CD4-positive, alpha-beta memory T cell (primary cell): ENCODE measurements at regions of chr4 and their contacts with region 1.

Region 1: GRCh38 chr4:184453365-184454160 is 20.8 kb downstream of the IRF2 start:
- DNase-seq: peak; percentile 42 to 82 (median 56)
- H3K4me3 ChIP-seq: no peak overlapping the region
- H3K4me3 Mint-ChIP-seq: peak overlapping the region in 7 of 8 donors; percentile 42 to 84 (median 71)
- H3K27ac ChIP-seq: peak overlapping the region; percentile 44
- H3K27ac Mint-ChIP-seq: peak overlapping the region; percentile 79 to 96 (median 88)
- H3K4me1 ChIP-seq: peaks cover 74% of the 10 kb centered on the region
- H3K4me1 Mint-ChIP-seq: peaks cover 56 to 90% (median 72%) of the 10 kb centered on the region in 4 donors
- H3K27me3 ChIP-seq: no peaks in the 10 kb centered on the region
- H3K27me3 Mint-ChIP-seq: no peaks in the 10 kb centered on the region

Region 2: GRCh38 chr4:184310171-184310567 is 143.4 kb before region 1 on chr4:
- CTCF ChIA-PET with region 1: no interaction called
- POLR2A ChIA-PET with region 1: no interaction called
- intact Hi-C with region 1: loop called (anchors 1 kb)
- DNase-seq: peak; percentile 46 to 61 (median 48)
- H3K4me3 ChIP-seq: no peak overlapping the region
- H3K4me3 Mint-ChIP-seq: peak overlapping the region in 7 of 8 donors; percentile 27 to 63 (median 53)
- H3K27ac ChIP-seq: no peak overlapping the region
- H3K27ac Mint-ChIP-seq: peak overlapping the region; percentile 17 to 94 (median 71)
- H3K4me1 ChIP-seq: peaks cover 15% of the 10 kb centered on the region
- H3K4me1 Mint-ChIP-seq: peaks cover 18 to 29% (median 24%) of the 10 kb centered on the region in 4 donors
- H3K27me3 ChIP-seq: no peaks in the 10 kb centered on the region
- H3K27me3 Mint-ChIP-seq: no peaks in the 10 kb centered on the region

Region 3: GRCh38 chr4:184417802-184418511 is 35.6 kb before region 1 on chr4:
- CTCF ChIA-PET with region 1: no interaction called
- POLR2A ChIA-PET with region 1: interaction called, 3 read pairs
- intact Hi-C with region 1: loop called (anchors 2 kb)
- DNase-seq: peak in 3 of 5 donors; percentile 18 to 62 (median 28)
- H3K4me3 ChIP-seq: peak overlapping the region in 1 of 2 donors; percentile 63
- H3K4me3 Mint-ChIP-seq: peak overlapping the region; percentile 22 to 89 (median 82)
- H3K27ac ChIP-seq: peak overlapping the region; percentile 81
- H3K27ac Mint-ChIP-seq: peak overlapping the region; percentile 94 to 99 (median 98)
- H3K4me1 ChIP-seq: peaks cover 79% of the 10 kb centered on the region
- H3K4me1 Mint-ChIP-seq: peaks cover 55 to 83% (median 69%) of the 10 kb centered on the region in 4 donors
- H3K27me3 ChIP-seq: no peaks in the 10 kb centered on the region
- H3K27me3 Mint-ChIP-seq: no peaks in the 10 kb centered on the region

Region 4: DNA sequence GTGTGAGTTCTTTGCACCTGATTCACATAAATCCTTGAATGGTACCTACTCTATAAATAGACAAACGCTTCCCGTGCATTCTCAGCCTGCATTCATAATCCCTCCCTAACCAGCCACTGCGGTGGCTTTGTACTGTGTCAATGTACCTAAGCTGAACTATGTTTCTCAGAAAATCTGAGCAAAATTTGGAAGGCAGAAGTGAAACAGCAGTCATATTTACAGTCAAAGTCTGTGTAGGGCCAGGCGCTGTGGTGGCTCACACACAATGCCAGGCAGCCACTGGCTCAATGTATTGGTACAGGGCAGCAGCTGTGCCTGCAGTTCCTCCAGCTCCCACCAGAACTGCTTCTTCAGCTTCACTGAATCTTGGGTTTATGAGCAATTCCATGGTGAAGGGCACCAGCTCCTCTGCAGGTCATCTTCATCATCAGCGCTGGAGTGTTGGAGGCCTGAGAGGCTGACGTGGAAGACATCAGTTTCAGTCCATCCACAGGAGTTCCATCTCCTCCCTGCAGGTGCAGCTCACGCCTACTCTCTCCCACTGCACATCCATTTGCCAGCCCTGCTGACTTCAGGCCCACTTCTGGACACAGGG is 53.1 kb after region 1 on chr4:
- CTCF ChIA-PET with region 1: no interaction called
- POLR2A ChIA-PET with region 1: no interaction called
- intact Hi-C with region 1: no loop called
- DNase-seq: peak in 2 of 5 donors; percentile 10 to 41
- H3K4me3 ChIP-seq: no peak overlapping the region
- H3K4me3 Mint-ChIP-seq: peak overlapping the region in 2 of 8 donors; percentile 6 to 30
- H3K27ac ChIP-seq: no peak overlapping the region
- H3K27ac Mint-ChIP-seq: peak overlapping the region in 3 of 7 donors; percentile 7 to 39 (median 18)
- H3K4me1 ChIP-seq: peaks cover 20% of the 10 kb centered on the region
- H3K4me1 Mint-ChIP-seq: peaks cover 13 to 30% (median 19%) of the 10 kb centered on the region in 4 donors
- H3K27me3 ChIP-seq: no peaks in the 10 kb centered on the region
- H3K27me3 Mint-ChIP-seq: no peaks in the 10 kb centered on the region